GM10248 (cell line): ENCODE measurements at regions of chr10 and their contacts with region 1.

Region 1: GRCh38 chr10:30510169-30510930 is 76.4 kb downstream of the MAP3K8 start:
- DNase-seq: peak; percentile 68
- CTCF ChIP-seq: no peak

Region 2: DNA sequence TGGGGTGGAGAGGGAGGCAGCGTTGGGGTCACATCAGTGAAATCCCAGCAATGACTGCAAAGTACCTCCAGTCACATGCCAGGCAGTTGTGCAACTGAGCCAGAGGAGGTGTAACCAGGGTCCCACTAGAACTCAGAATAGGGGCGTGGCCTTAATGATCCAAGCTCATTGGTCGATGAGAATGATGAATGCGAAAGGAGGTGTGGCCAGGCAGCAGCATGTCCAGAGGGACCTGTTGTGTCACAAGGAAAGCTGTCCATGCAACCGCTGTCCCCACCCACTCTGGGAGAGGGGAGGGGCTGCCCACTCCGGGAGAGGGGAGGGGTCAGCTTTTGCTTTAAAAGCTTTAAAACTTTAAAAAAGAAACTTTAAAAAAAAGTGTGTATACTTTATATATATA is 136.0 kb before region 1 on chr10:
- CTCF ChIA-PET with region 1: no interaction called
- POLR2A ChIA-PET with region 1: no interaction called
- DNase-seq: no peak
- CTCF ChIP-seq: no peak

Region 3: DNA sequence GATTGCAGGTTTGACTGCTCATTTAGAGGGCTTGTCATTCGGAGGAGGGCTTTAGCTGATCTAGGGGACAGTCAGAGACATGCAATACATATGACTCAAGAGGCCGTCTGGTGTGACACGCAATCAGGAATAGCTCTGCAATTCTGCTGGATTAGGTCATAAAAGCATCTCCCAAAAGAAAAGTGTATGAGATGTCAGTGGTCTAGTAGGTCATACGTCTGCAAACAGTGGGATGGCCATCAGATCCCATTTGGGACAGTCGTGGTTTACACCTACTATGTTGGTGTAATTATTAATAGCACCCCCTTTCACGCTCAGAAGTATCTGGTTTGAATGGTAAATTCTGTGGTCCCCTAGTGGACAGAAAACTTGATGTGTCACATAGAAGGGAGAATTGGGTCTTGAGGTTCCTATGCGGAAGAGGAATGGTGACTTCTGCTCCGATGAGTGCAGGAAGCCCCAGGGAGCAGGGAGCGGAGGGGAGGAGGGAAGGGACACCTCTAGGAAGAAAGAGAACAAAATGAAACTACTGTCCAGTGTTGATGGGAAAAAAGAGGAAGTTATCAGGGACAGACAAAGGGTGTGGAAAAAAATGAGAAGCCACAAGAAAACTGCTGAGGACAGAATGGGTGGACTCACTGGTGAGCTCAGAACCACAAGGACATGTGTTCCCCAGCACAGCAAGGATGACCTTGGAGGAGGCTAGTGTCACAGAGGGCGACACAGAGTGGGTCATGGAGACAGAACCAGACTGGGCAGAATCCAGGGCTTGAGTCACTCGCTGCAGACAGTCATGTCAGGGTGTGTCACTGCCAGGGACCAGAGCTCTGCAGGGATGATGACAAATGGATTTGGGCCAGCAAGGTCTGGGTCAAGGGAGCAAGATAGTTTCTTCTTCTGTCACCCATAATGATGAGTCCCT is 16.5 kb before region 1 on chr10:
- CTCF ChIA-PET with region 1: interaction called, 27 read pairs
- POLR2A ChIA-PET with region 1: no interaction called
- DNase-seq: no peak
- CTCF ChIP-seq: peak; percentile 22

Region 4: GRCh38 chr10:30499816-30500215 is 10.5 kb before region 1 on chr10:
- CTCF ChIA-PET with region 1: interaction called, 27 read pairs
- POLR2A ChIA-PET with region 1: no interaction called
- DNase-seq: no peak
- CTCF ChIP-seq: no peak

Region 5: GRCh38 chr10:30629653-30630052 is 119.3 kb after region 1 on chr10 and contains the start of gene LYZL2:
- CTCF ChIA-PET with region 1: no interaction called
- POLR2A ChIA-PET with region 1: no interaction called
- DNase-seq: no peak
- CTCF ChIP-seq: no peak